Heart right ventricle (tissue), 16 donors: ENCODE measurements at regions of chr5 and their contacts with region 1.

Region 1: DNA sequence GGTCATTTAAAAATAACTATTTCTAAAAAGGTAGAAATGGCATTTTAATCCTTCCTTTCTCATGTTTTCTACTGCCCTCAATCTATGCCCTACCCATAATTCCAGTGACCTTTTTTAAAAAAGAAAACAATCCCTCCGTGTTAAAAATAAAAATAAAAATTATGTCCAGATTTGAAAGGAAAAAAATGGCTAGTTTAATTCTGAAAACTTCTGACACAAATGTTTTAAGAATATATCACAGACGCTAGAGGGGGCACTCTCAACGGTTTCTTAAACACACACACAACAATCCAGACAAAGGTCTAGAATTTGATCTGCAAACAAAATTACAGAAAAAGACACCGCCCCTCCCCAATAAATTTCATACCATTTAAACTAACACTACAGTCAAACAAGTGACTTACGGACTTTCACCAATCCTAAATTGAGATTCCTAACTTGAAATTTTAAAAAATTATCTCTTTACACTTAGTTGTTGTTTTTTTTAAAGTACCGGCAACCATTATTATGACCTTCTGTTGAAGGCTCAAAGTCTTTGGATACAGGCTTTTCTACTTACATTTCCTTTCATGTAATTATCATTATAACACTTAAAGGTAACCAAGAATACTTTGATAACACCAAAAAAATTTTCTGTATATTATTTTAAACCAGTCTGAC is 38.2 kb downstream of the CLINT1 start:
- DNase-seq: peak in 1 of 2 donors; percentile 47
- ATAC-seq: peak in 5 of 8 donors; percentile 37 to 73 (median 58)
- H3K4me3 ChIP-seq: no peak overlapping the region
- H3K27ac ChIP-seq: peak overlapping the region in 3 of 10 donors; percentile 28 to 66 (median 39)
- H3K4me1 ChIP-seq: peaks cover 0 to 72% (median 56%) of the 10 kb centered on the region in 9 donors
- H3K27me3 ChIP-seq: no peaks in the 10 kb centered on the region
- CTCF ChIP-seq: peak; percentile 35 to 71 (median 61)

Region 2: DNA sequence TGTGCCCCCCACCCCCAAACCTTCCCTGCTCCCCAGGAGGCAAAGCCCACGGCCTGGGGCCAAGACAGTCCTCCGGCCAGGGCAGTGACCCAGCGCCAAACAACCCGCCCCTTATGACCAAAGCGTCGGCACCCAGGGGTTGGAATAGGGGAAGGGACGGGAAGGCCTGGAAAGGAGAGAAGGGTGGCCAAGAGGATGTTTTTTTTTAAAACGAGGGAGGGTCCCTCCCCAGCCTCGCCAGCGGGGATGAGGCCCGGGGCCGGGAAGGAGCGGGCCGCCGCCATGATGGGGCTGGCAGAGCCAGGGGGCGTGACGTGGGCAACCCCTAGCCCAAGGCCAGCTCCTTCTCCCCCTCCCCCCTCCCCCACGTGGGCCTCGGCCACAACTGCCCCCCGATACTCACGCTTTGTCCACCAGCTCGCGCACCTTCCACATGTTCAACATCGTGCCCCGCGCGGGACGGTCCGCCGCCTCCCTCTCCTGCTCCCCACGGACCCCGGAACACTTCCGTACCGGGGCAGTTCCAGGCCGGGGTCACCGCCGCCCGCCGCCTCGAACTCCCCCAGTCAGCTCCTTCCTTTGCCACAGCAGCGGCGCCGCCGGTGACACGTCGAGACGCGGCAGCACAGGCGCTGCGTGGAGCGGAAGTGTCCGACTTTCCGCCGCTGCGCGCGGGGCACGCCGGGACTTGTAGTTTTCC is 38.0 kb after region 1 on chr5 and contains the start of gene CLINT1:
- intact Hi-C with region 1: loop called in 6 of 10 experiments (anchors 1 to 5 kb)
- DNase-seq: peak; percentile 92 to 94
- ATAC-seq: peak; percentile 98 to 99 (median 98)
- H3K4me3 ChIP-seq: peak within 1 kb of the TSS; percentile 60 to 97 (median 86)
- H3K27ac ChIP-seq: peak within 1 kb of the TSS; percentile 59 to 93 (median 90)
- H3K4me1 ChIP-seq: peaks cover 0 to 48% (median 37%) of the 10 kb centered on the region in 9 donors
- H3K27me3 ChIP-seq: no peaks in the 10 kb centered on the region
- CTCF ChIP-seq: peak in 3 of 9 donors; percentile 5 to 13 (median 8)
- total RNA-seq, gene CLINT1: 44.4 to 54.7 (median 52.0) TPM

Region 3: GRCh38 chr5:157917899-157918809 is 97.4 kb after region 1 on chr5:
- intact Hi-C with region 1: loop called in 5 of 10 experiments (anchors 2 to 5 kb)
- DNase-seq: peak; percentile 42 to 57
- ATAC-seq: peak in 7 of 8 donors; percentile 27 to 61 (median 45)
- H3K4me3 ChIP-seq: no peak overlapping the region
- H3K27ac ChIP-seq: peak overlapping the region in 2 of 10 donors; percentile 10 to 36
- H3K4me1 ChIP-seq: peaks cover 5 to 58% (median 40%) of the 10 kb centered on the region in 9 donors
- H3K27me3 ChIP-seq: no peaks in the 10 kb centered on the region
- CTCF ChIP-seq: peak in 8 of 9 donors; percentile 8 to 67 (median 52)

Region 4: GRCh38 chr5:157948738-157949410 is 128.2 kb after region 1 on chr5:
- intact Hi-C with region 1: loop called in 8 of 10 experiments (anchors 2 to 10 kb)
- DNase-seq: peak; percentile 70 to 93
- ATAC-seq: peak; percentile 91 to 99 (median 99)
- H3K4me3 ChIP-seq: peak overlapping the region in 3 of 10 donors; percentile 3 to 13 (median 4)
- H3K27ac ChIP-seq: peak overlapping the region in 4 of 10 donors; percentile 12 to 41 (median 24)
- H3K4me1 ChIP-seq: peaks cover 0 to 11% (median 4%) of the 10 kb centered on the region in 9 donors
- H3K27me3 ChIP-seq: no peaks in the 10 kb centered on the region
- CTCF ChIP-seq: peak; percentile 71 to 96 (median 90)

Region 5: GRCh38 chr5:157994906-157995519 is 174.3 kb after region 1 on chr5:
- intact Hi-C with region 1: loop called (anchors 2 to 10 kb)
- DNase-seq: peak; percentile 58 to 60
- ATAC-seq: peak; percentile 86 to 97 (median 92)
- H3K4me3 ChIP-seq: no peak overlapping the region
- H3K27ac ChIP-seq: no peak overlapping the region
- H3K4me1 ChIP-seq: peaks cover 0 to 4% (median 0%) of the 10 kb centered on the region in 9 donors
- H3K27me3 ChIP-seq: peaks cover 0 to 4% (median 0%) of the 10 kb centered on the region in 7 donors
- CTCF ChIP-seq: peak; percentile 63 to 84 (median 78)

Region 6: DNA sequence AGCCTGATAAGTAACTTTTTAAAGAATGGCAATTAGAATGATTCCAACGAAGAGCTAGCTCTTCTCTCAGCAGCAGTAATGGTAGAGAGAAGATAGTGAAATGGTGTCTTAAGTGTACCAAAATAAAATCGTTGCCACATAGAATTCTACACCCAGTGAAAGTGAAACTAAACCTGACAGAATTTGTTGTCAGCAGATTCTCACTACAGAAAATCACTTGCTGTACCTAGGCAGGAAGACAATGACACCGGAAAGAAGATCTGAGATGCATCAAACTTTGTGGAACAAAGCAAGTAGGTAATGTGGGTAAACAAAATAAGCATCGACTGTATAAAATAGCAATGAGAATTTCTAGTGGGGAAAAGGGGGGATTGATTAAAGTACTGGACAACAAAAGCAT is 1299.7 kb after region 1 on chr5:
- intact Hi-C with region 1: loop called in 2 of 10 experiments (anchors 10 kb)
- DNase-seq: no peak
- ATAC-seq: peak in 2 of 8 donors; percentile 20 to 37
- H3K4me3 ChIP-seq: no peak overlapping the region
- H3K27ac ChIP-seq: peak overlapping the region in 1 of 10 donors; percentile 59
- H3K4me1 ChIP-seq: peaks cover 0 to 8% (median 0%) of the 10 kb centered on the region in 9 donors
- H3K27me3 ChIP-seq: no peaks in the 10 kb centered on the region
- CTCF ChIP-seq: no peak

Region 7: GRCh38 chr5:159133041-159133741 is 1312.5 kb after region 1 on chr5:
- intact Hi-C with region 1: loop called in 3 of 10 experiments (anchors 10 kb)
- DNase-seq: peak in 1 of 2 donors; percentile 16
- ATAC-seq: peak; percentile 37 to 77 (median 52)
- H3K4me3 ChIP-seq: peak overlapping the region in 4 of 10 donors; percentile 15 to 37 (median 22)
- H3K27ac ChIP-seq: peak overlapping the region in 1 of 10 donors; percentile 15
- H3K4me1 ChIP-seq: no peaks in the 10 kb centered on the region
- H3K27me3 ChIP-seq: peaks cover 0 to 12% (median 0%) of the 10 kb centered on the region in 7 donors
- CTCF ChIP-seq: peak; percentile 70 to 88 (median 83)